CD8-positive, alpha-beta T cell (primary cell): ENCODE measurements at regions of chr3 and their contacts with region 1.

Region 1: DNA sequence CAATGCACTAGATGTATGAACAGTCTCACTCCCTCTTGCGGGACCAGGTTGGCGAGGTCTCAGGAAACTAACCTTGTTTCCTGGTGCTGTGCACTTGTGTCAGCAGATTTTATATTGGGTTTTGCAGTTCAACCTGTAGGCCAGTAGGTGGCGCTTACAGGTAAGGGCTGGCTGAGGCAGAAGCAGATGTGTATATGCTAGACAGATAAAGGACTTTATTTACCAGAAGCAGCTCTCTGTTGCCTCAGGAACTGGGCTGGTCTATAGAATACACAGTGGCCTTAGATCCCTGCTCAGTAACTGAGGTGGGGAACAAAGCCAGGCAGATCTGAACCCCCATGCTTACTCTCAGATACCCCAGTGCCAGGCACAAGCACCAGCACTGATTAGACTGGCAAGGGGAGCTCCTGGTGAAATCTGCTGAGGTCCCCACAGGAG is 296.8 kb downstream of the DOCK3 start:
- DNase-seq: peak; percentile 6 to 85 (median 55)
- ATAC-seq: peak; percentile 98
- H3K4me3 ChIP-seq: no peak overlapping the region
- H3K4me3 Mint-ChIP-seq: no peak overlapping the region
- H3K27ac ChIP-seq: peak overlapping the region in 1 of 2 experiments; percentile 49
- H3K27ac Mint-ChIP-seq: peak overlapping the region; percentile 41
- H3K4me1 ChIP-seq: peaks cover 10% of the 10 kb centered on the region
- H3K4me1 Mint-ChIP-seq: peaks cover 15% of the 10 kb centered on the region
- H3K27me3 ChIP-seq: no peaks in the 10 kb centered on the region
- H3K27me3 Mint-ChIP-seq: no peaks in the 10 kb centered on the region
- CTCF ChIP-seq: peak; percentile 84

Region 2: GRCh38 chr3:50088725-50089608 is 882.5 kb before region 1 on chr3 and contains the start of gene RBM5:
- CTCF ChIA-PET with region 1: no interaction called
- POLR2A ChIA-PET with region 1: no interaction called
- intact Hi-C with region 1: no loop called
- DNase-seq: peak; percentile 80 to 94 (median 92)
- ATAC-seq: peak; percentile 99
- H3K4me3 ChIP-seq: peak within 1 kb of the TSS; percentile 100
- H3K4me3 Mint-ChIP-seq: peak within 1 kb of the TSS; percentile 96
- H3K27ac ChIP-seq: peak within 1 kb of the TSS; percentile 97 to 99
- H3K27ac Mint-ChIP-seq: peak within 1 kb of the TSS; percentile 98
- H3K4me1 ChIP-seq: peaks cover 27% of the 10 kb centered on the region
- H3K4me1 Mint-ChIP-seq: peaks cover 34% of the 10 kb centered on the region
- H3K27me3 ChIP-seq: no peaks in the 10 kb centered on the region
- H3K27me3 Mint-ChIP-seq: no peaks in the 10 kb centered on the region
- CTCF ChIP-seq: no peak
- total RNA-seq, gene RBM5: 376 to 409 TPM

Region 3: GRCh38 chr3:50926868-50927267 is 44.6 kb before region 1 on chr3:
- CTCF ChIA-PET with region 1: no interaction called
- POLR2A ChIA-PET with region 1: no interaction called
- intact Hi-C with region 1: no loop called
- DNase-seq: peak in 1 of 9 experiments; percentile 3
- ATAC-seq: no peak
- H3K4me3 ChIP-seq: no peak overlapping the region
- H3K4me3 Mint-ChIP-seq: no peak overlapping the region
- H3K27ac ChIP-seq: no peak overlapping the region
- H3K27ac Mint-ChIP-seq: peak overlapping the region; percentile 52
- H3K4me1 ChIP-seq: peaks cover 6% of the 10 kb centered on the region
- H3K4me1 Mint-ChIP-seq: peaks cover 9% of the 10 kb centered on the region
- H3K27me3 ChIP-seq: no peaks in the 10 kb centered on the region
- H3K27me3 Mint-ChIP-seq: peaks cover 15% of the 10 kb centered on the region
- CTCF ChIP-seq: no peak

Region 4: DNA sequence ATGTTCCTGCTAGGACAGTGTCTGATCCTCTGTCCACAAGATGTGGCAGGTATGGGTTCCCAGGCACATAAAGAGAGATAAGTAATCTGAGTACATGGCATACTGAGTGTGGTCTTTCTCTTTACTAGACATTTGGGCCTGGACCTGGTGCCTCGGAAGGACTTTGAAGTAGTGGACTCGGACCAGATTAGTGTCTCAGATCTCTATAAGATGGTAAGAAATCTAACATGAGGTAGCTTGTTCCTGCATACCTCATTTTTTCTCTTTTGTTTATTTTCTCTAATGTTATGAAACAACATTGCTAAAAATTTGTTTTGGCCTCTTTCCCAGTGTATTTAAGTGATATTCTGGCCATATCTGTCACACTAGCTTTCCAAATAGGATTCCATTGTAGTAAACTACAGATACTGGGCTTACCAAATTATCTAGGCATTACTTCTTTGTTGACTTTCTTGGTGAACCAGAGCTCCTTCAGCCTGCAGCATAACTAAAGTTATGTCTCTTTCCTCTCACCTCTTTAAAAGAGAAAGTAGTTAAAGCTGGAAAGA is 103.8 kb after region 1 on chr3:
- CTCF ChIA-PET with region 1: interaction called, 4 read pairs
- POLR2A ChIA-PET with region 1: no interaction called
- intact Hi-C with region 1: loop called in 1 of 2 experiments (anchors 10 kb)
- DNase-seq: no peak
- ATAC-seq: no peak
- H3K4me3 ChIP-seq: no peak overlapping the region
- H3K4me3 Mint-ChIP-seq: no peak overlapping the region
- H3K27ac ChIP-seq: no peak overlapping the region
- H3K27ac Mint-ChIP-seq: no peak overlapping the region
- H3K4me1 ChIP-seq: no peaks in the 10 kb centered on the region
- H3K4me1 Mint-ChIP-seq: no peaks in the 10 kb centered on the region
- H3K27me3 ChIP-seq: no peaks in the 10 kb centered on the region
- H3K27me3 Mint-ChIP-seq: no peaks in the 10 kb centered on the region
- CTCF ChIP-seq: no peak

Region 5: DNA sequence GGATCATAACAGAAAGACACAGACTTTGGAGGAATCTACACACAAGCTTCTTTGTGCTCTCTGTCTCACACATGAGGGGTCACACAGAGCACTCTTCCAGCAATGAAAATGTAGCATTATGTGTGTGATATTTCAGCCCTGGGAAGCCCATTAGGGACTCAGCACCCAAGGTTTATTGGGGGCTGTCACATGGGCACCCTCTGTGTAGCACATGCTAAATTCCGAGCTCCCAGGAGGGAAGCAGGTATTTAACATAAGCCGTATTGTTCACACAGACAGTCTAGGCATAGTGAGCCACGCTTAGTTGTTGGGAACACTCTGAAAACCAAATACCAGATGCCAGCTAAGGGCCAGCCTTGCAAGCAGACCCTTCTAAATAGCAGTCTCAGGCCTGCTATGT is 152.0 kb after region 1 on chr3:
- CTCF ChIA-PET with region 1: interaction called, 10 read pairs
- POLR2A ChIA-PET with region 1: no interaction called
- intact Hi-C with region 1: no loop called
- DNase-seq: no peak
- ATAC-seq: no peak
- H3K4me3 ChIP-seq: no peak overlapping the region
- H3K4me3 Mint-ChIP-seq: no peak overlapping the region
- H3K27ac ChIP-seq: no peak overlapping the region
- H3K27ac Mint-ChIP-seq: no peak overlapping the region
- H3K4me1 ChIP-seq: no peaks in the 10 kb centered on the region
- H3K4me1 Mint-ChIP-seq: no peaks in the 10 kb centered on the region
- H3K27me3 ChIP-seq: no peaks in the 10 kb centered on the region
- H3K27me3 Mint-ChIP-seq: no peaks in the 10 kb centered on the region
- CTCF ChIP-seq: no peak

Region 6: DNA sequence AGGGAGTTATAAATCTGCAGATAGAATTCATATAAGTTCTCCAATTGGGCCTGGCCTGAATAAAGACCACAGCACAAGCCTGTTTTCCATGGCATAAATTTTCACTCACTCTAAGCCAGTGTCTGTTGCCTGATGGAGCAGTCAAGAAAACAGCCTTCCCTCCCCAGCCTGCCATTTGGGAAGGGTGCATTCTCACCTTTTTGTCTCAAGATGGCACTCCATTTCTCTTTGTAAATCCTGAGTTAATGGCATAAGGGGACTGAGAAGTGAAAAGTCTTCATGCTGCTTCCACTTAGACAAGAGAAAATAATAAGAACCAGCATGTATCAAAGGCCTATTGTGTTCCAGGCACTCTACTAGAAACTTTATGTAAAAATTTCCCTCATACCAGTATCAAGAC is 298.0 kb after region 1 on chr3:
- CTCF ChIA-PET with region 1: interaction called, 36 read pairs
- POLR2A ChIA-PET with region 1: no interaction called
- intact Hi-C with region 1: no loop called
- DNase-seq: peak in 1 of 9 experiments; percentile 12
- ATAC-seq: no peak
- H3K4me3 ChIP-seq: no peak overlapping the region
- H3K4me3 Mint-ChIP-seq: no peak overlapping the region
- H3K27ac ChIP-seq: no peak overlapping the region
- H3K27ac Mint-ChIP-seq: peak overlapping the region; percentile 96
- H3K4me1 ChIP-seq: peaks cover 31% of the 10 kb centered on the region
- H3K4me1 Mint-ChIP-seq: peaks cover 55% of the 10 kb centered on the region
- H3K27me3 ChIP-seq: no peaks in the 10 kb centered on the region
- H3K27me3 Mint-ChIP-seq: no peaks in the 10 kb centered on the region
- CTCF ChIP-seq: no peak

Region 7: GRCh38 chr3:51311055-51311454 is 339.5 kb after region 1 on chr3:
- CTCF ChIA-PET with region 1: interaction called, 35 read pairs
- POLR2A ChIA-PET with region 1: no interaction called
- intact Hi-C with region 1: loop called (anchors 1 to 2 kb)
- DNase-seq: peak in 2 of 9 experiments; percentile 40 to 51
- ATAC-seq: peak; percentile 38
- H3K4me3 ChIP-seq: no peak overlapping the region
- H3K4me3 Mint-ChIP-seq: no peak overlapping the region
- H3K27ac ChIP-seq: no peak overlapping the region
- H3K27ac Mint-ChIP-seq: no peak overlapping the region
- H3K4me1 ChIP-seq: no peaks in the 10 kb centered on the region
- H3K4me1 Mint-ChIP-seq: peaks cover 3% of the 10 kb centered on the region
- H3K27me3 ChIP-seq: no peaks in the 10 kb centered on the region
- H3K27me3 Mint-ChIP-seq: no peaks in the 10 kb centered on the region
- CTCF ChIP-seq: peak; percentile 31

Region 8: GRCh38 chr3:51353691-51354090 is 382.2 kb after region 1 on chr3:
- CTCF ChIA-PET with region 1: no interaction called
- POLR2A ChIA-PET with region 1: no interaction called
- intact Hi-C with region 1: no loop called
- DNase-seq: no peak
- ATAC-seq: no peak
- H3K4me3 ChIP-seq: no peak overlapping the region
- H3K4me3 Mint-ChIP-seq: no peak overlapping the region
- H3K27ac ChIP-seq: no peak overlapping the region
- H3K27ac Mint-ChIP-seq: no peak overlapping the region
- H3K4me1 ChIP-seq: no peaks in the 10 kb centered on the region
- H3K4me1 Mint-ChIP-seq: no peaks in the 10 kb centered on the region
- H3K27me3 ChIP-seq: no peaks in the 10 kb centered on the region
- H3K27me3 Mint-ChIP-seq: no peaks in the 10 kb centered on the region
- CTCF ChIP-seq: no peak

Region 9: GRCh38 chr3:51378065-51378464 is 406.6 kb after region 1 on chr3:
- CTCF ChIA-PET with region 1: interaction called, 11 read pairs
- POLR2A ChIA-PET with region 1: no interaction called
- intact Hi-C with region 1: loop called in 1 of 2 experiments (anchors 2 kb)
- DNase-seq: no peak
- ATAC-seq: no peak
- H3K4me3 ChIP-seq: no peak overlapping the region
- H3K4me3 Mint-ChIP-seq: no peak overlapping the region
- H3K27ac ChIP-seq: no peak overlapping the region
- H3K27ac Mint-ChIP-seq: no peak overlapping the region
- H3K4me1 ChIP-seq: peaks cover 12% of the 10 kb centered on the region
- H3K4me1 Mint-ChIP-seq: peaks cover 10% of the 10 kb centered on the region
- H3K27me3 ChIP-seq: no peaks in the 10 kb centered on the region
- H3K27me3 Mint-ChIP-seq: no peaks in the 10 kb centered on the region
- CTCF ChIP-seq: no peak

Region 10: DNA sequence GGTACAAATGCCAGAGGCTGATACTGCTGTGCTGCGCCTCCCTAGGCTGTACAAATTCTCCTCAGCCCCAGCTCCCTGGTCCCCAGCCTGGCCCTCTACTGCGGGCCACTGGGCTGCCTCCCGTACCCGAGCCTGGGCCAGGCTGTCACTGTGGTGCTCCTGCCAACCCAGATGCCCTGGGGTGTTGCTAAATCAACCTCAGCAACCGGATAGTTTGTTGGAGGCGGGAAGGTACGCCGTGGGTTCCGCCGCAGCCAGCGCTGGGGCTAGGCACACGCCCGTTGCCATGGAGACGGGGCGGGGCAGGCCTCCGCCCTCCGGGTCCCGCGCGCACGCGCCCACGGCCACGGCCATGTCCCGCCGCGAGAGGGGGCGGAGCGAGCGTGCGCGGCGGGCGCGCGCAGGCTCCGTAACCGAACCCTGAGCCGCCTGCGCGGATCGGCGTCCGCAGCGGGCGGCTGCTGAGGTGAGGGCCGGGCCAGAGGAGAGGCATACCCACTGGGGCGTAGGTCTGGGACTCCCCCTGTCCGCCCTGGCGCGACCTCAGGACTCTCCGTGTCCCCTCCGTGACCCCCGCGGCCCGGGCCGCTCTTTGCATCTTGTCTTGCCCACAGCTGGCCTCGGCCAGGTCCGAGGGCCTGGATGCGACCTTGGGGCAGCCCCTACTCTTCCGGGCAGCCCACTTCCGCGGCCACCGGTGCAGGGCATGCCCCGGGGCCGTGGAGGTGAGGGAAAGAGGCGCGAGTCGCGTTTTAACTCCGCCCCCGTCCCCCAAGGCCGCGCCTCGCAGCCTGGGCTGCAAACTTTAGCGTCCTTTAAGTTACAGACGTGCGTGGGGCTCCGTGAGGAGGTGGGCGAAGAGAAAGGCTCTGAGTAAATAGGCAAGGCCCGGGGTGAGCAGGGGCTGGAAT is 699.6 kb after region 1 on chr3 and contains the start of gene TEX264:
- CTCF ChIA-PET with region 1: no interaction called
- POLR2A ChIA-PET with region 1: no interaction called
- intact Hi-C with region 1: loop called in 1 of 2 experiments (anchors 5 kb)
- DNase-seq: peak; percentile 85 to 99 (median 95)
- ATAC-seq: peak; percentile 78
- H3K4me3 ChIP-seq: peak within 1 kb of the TSS; percentile 95 to 99
- H3K4me3 Mint-ChIP-seq: peak within 1 kb of the TSS; percentile 89
- H3K27ac ChIP-seq: peak within 1 kb of the TSS; percentile 67 to 92
- H3K27ac Mint-ChIP-seq: peak within 1 kb of the TSS; percentile 88
- H3K4me1 ChIP-seq: peaks cover 58% of the 10 kb centered on the region
- H3K4me1 Mint-ChIP-seq: peaks cover 63% of the 10 kb centered on the region
- H3K27me3 ChIP-seq: no peaks in the 10 kb centered on the region
- H3K27me3 Mint-ChIP-seq: no peaks in the 10 kb centered on the region
- CTCF ChIP-seq: no peak
- total RNA-seq, gene TEX264: 18.7 to 21.0 TPM